Posterior cingulate gyrus (tissue), 11 donors: ENCODE measurements at regions of chr4 and their contacts with region 1.

Region 1: DNA sequence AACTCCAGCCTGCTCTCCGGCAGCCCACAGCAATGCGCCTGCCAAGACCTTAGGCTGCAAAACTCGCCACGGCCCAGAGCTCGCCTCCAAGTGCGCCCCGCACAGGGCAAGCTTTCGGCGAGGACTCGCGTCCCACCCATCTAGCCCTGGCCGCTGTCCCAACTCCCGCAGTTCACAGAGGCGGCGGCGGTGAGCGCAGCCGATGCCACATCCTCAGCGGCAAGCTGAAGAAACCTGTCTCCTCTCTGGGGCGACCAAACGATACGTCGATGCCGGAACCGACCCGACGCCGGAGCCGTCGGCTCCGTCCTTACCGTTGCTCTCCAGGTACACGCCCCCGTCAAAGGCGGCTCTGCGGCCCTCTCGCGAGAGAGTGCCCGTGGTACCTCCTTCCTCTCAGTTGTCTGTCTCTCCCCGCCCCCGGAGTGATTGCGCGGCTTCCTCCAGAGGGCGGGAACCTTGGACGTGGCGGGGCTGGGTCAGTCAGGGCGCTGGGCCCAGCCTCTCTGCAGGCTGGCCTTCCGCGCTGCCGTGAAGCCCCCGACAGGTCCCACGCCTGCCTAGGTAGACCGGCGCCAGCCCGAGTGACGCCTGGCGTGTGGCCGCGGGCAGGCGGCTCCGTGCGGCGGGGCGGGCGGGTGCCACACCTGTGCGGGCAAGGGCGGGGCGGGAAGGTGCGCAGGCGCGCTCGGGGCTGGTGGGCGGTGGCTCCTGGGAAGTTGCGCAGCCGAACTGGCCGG is 380 bp upstream of the RAB33B start:
- DNase-seq: peak; percentile 86 to 99 (median 91)

Region 2: GRCh38 chr4:139554893-139555704 is 101.6 kb after region 1 on chr4:
- intact Hi-C with region 1: loop called (anchors 5 kb)
- DNase-seq: peak; percentile 74 to 97 (median 82)